ENCODE measurements at regions of chr14 and their contacts with region 1.

Region 1: GRCh38 chr14:51651388-51652167 is at the start of gene FRMD6:
- DNase-seq: peak; percentile 74
- H3K4me3 Mint-ChIP-seq: peak within 1 kb of the TSS; percentile 81
- H3K27ac Mint-ChIP-seq: peak within 1 kb of the TSS; percentile 74
- H3K4me1 Mint-ChIP-seq: peaks cover 18% of the 10 kb centered on the region
- H3K27me3 Mint-ChIP-seq: peaks cover 7% of the 10 kb centered on the region
- total RNA-seq, gene FRMD6: 5.9 and 6.1 TPM in 2 replicates

Region 2: DNA sequence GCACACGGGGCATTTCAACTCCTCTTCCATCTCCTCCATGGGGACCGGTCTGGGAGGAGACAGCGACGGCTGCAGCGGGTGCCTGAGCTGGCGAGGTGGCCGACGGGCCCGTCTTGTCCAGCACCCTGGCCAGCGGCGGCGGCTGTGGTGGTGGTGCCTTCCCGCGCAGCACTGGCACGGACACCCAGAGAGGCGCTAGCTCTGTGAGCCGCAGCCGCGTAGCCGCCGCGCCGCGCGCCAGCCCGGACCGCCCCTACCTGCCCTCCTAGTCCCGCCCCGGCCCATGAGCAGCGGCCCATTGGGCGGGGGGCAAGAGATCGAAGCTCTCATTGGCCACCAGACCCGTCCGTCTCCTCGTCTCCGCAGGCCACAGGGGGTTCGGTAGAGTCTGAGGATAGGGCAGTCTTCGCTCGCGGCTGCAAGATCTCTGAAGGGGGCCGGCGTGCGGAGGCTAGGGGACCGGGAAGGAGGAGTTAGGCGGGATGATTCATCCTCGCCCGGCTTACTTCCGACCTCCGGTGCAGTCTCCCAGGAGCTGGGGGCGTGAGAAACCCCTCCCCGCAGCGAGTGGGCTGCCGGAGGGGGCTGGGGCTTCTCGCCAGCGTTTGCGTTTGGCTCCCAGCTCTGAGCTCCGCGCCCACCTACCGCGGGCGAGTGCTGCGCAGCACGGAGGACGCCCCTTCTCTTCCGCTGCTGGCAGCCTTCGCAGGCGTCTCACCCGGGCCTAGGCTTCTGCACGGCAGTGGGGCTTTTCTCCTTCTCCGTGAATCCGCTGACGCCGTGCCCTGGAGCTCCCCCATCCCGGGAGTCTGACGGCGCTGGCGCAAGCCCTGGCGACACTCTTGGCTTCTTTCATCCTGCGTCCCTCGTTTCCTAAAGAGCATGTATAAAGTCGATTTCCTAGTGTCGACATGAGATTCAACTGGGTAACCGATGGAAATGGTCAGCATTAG is 556.4 kb before region 1 on chr14 and contains the start of gene TRIM9:
- intact Hi-C with region 1: loop called (anchors 1 kb)
- DNase-seq: peak; percentile 84
- H3K4me3 Mint-ChIP-seq: peak within 1 kb of the TSS; percentile 88
- H3K27ac Mint-ChIP-seq: peak within 1 kb of the TSS; percentile 65
- H3K4me1 Mint-ChIP-seq: peaks cover 11% of the 10 kb centered on the region
- H3K27me3 Mint-ChIP-seq: peaks cover 51% of the 10 kb centered on the region
- total RNA-seq, gene TRIM9: 0.31 TPM in 1 of 2 replicates, not detected in the other

Region 3: DNA sequence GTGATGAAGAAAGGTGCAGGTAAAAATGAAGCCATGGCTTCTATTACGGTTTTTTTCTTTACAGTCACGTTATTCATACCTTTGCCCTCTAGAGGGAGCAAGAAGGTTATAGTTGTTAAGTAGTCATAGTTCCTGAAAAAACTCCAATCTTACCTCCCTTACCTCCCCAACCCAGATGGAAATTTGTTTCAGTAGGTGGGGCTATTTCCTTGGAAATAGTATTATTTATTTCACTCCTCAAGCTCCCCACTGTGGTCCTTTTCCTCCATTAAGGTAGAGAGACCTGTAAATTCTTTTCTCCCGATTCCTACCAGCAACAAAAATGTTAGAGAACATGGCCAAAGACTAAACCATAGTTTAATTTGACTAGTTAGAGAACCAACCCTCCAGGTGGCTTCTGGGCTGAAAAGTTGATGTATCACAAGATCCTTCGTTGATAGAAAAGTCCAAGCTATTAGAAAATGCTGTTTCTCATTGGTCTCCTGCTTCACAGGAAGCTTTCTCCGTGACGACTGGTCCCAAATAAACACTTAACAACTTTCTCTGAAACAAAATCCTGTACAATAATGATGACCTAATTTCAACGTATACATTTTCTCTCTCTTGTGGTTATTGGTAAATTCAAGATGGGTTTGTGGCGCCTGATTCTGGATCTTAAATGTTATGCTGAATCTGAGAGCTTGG is 368.0 kb before region 1 on chr14:
- intact Hi-C with region 1: loop called (anchors 5 kb)
- DNase-seq: no peak
- H3K4me3 Mint-ChIP-seq: no peak overlapping the region
- H3K27ac Mint-ChIP-seq: no peak overlapping the region
- H3K4me1 Mint-ChIP-seq: no peaks in the 10 kb centered on the region
- H3K27me3 Mint-ChIP-seq: no peaks in the 10 kb centered on the region

Region 4: DNA sequence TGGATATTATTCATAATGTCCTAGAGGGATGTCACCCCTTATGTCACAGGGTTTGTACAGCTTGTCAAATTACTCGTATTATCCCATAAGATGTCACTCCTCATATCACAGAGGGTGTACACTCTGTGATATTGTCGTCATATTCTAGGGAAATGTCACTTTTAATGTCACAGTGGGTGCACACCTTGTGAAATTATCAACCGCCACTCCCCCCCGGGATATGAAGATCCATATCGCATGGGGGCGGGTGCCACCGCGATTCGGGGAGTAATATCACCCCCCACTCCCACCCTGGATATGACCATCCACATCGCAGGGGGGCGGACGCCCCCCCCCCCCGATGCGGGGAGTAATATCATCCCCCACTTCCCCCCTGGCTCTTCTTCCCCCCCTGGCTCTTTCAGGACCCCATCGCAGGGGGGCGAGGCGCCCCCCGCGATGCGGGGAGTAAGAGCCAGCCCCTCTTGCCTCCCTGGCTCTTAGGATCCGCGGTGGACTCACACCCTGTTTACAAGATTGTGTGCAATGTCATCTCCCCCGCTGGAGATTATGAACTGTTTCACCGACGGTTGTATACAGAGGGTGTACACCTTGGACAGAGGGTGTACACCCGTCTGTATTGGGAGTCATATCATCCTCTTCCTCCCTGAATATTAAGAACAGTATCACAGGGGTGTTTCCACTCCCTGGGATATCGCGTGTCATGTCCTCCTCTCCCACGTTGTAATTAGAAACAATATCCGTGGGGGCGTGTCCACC is 93.0 kb after region 1 on chr14:
- intact Hi-C with region 1: loop called (anchors 1 kb)
- DNase-seq: peak; percentile 21
- H3K4me3 Mint-ChIP-seq: no peak overlapping the region
- H3K27ac Mint-ChIP-seq: no peak overlapping the region
- H3K4me1 Mint-ChIP-seq: no peaks in the 10 kb centered on the region
- H3K27me3 Mint-ChIP-seq: no peaks in the 10 kb centered on the region

Region 5: DNA sequence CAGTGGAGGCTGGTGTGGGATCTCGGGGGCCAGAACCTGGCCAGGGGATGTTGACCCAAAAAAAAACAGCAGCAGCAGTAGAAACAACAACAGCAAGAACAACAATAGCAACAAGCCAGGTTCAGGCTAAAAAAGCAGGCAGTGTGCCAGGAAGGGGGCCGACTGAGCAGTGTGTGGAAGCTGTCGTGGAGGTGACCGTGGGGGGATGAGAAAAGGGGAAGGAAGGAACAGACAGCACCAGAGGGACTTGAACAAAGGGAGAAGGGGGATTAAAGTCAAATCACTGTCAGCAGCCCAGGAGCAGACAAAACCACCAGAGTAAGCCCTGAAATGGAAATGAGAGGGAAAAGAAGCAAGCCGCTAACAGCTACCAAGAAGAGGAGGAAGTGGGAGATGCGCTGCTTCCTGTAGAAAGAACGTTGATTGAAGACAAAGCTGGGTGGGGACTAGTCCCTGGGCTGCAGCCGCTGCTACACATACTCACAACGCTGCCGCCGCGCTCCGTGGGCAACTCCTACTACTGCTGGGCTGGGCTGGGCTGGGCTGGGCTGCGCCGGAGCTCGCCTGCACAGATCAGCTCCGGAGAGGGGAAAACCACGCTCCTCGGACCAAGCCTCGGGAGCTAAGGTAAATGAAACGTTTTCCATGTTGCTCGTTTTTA is 208.7 kb after region 1 on chr14 and contains the start of gene GNG2:
- intact Hi-C with region 1: loop called (anchors 5 kb)
- DNase-seq: peak; percentile 77
- H3K4me3 Mint-ChIP-seq: peak within 1 kb of the TSS; percentile 95
- H3K27ac Mint-ChIP-seq: peak within 1 kb of the TSS; percentile 88
- H3K4me1 Mint-ChIP-seq: peaks cover 63% of the 10 kb centered on the region
- H3K27me3 Mint-ChIP-seq: peaks cover 2% of the 10 kb centered on the region
- total RNA-seq, gene GNG2: 126 and 128 TPM in 2 replicates

Region 6: DNA sequence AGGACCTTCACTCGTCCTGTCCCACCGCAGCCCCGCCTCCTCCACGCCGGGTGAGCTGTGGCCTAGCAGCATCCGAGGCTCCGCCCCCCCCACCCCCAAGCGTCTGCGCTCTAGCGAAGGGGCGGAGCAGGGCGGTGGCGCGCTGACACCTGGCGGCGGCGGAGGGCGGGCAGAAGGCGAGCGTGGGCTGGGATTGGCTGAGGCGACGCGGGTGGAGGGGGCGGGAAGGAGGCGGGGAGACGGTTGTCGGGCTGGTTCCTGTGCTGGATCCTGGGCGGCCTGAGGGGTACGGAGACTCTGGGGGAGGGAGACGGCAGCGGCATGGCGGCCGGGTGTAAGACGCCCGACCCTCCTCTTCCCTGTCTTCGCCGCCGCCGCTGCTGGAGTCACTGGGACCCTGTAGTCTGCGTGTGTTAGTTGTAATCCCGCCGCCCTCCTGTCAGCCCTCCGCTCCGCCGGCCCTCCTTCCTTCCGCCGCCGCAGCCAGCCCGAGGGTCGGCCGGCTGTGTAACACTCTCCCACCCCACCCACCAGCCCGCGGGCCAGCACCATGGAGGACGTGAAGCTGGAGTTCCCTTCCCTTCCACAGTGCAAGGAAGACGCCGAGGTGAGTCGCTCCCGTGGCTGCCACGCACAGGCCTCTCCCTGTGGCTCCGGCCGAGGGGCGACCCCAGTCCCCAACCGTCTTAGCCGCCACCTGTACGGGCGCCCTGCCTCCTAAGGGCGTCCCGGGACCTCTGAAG is 1078.5 kb after region 1 on chr14 and contains the start of gene STYX:
- intact Hi-C with region 1: loop called (anchors 10 kb)
- DNase-seq: peak; percentile 96
- H3K4me3 Mint-ChIP-seq: peak within 1 kb of the TSS; percentile 91
- H3K27ac Mint-ChIP-seq: peak within 1 kb of the TSS; percentile 76
- H3K4me1 Mint-ChIP-seq: peaks cover 37% of the 10 kb centered on the region
- H3K27me3 Mint-ChIP-seq: no peaks in the 10 kb centered on the region
- total RNA-seq, gene STYX: 18.7 and 21.3 TPM in 2 replicates

Measured in activated T-helper 1 cell treated with anti-CD3 and anti-CD28 coated beads, Interleukin-12 subunit alpha, Interleukin-12 subunit beta, Interleukin-2, Interleukin-4 antibody, amounts not matched to agents 30 ng/mL and 10 ng/mL and 1 ng/mL, durations not matched to agents 14 hours and 24 hours and 36 hours (primary cell).